ENCODE measurements at regions of chr14 and their contacts with region 1.

Region 1: DNA sequence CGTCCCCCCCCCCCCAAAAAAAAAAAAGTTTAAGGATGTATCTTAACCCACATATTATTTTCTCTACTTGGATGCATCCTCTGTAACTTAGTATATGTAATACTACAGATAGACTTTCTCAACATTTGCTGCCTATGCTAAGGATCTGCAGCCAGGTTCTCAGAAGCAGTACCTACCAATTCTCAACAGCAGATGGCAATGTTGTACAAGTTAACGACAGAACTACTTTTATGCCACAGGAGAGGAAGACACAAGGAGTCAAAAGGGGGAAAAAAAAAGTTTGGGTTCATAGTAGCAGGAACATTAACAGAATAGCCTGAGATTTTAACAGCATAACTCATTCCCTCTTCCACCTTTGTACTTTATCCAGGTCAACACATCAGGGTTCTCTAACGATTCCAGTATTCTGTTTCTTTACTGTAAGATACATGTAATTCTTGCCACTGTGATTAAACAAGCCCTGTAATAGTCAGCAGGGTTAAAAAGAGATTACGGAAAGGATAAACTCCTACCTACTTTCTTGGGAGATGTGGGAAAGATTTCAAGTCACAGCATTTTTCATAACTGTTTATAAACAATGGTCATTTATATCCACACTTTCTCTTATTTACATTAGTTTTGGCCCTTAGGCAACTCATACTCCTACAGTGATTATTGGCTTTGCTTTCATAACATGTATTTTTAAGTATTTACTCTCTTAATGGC is 5.7 kb upstream of the NEK9 start:
- DNase-seq: no peak

Region 2: GRCh38 chr14:74979442-74980361 is 152.8 kb before region 1 on chr14:
- intact Hi-C with region 1: no loop called
- DNase-seq: no peak

Region 3: DNA sequence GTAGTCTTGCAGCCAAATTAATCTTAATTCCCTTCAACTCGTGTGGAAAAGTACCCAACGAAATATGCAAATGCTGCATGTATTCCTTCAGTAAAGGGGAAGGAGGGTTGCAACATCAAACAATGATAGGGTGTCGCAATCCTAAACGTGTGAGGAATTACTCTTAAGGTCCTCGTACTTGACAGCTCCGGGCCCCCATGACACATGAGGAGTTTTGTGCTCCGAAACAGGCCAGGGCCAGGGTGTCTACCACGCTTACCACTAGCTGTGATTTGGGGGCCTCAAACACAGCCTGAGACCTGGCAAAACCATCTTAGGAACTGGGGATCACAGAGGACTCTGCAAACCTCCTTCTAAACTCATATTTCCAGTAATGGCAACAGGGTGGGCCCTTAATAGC is 166.5 kb after region 1 on chr14:
- intact Hi-C with region 1: loop called (anchors 2 kb)
- DNase-seq: peak; percentile 83

Region 4: DNA sequence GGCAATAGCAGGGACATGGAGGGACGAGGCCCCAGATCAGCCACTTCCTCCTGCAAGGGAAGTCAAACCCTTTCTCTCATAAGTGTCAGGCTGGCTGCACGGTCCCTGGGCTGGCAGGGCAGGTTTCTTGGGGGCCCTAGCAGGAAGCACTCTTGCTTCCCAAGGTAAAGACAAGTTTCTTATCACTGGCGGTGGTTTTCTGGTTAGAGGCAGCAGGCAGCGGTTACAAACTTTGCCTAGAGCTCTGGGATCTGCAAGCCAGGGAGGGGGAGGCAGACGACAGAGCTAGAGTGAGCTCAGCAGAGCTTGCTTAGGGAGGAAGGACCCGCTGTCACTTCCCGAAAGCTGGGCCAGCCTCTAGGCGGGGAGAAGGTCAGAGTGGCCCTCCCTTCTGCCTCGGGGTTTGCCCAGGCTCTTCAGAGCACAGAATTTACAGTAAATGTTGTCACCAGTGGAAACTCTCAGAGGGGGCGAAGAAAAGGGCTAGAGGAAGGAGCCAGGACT is 410.1 kb after region 1 on chr14:
- intact Hi-C with region 1: no loop called
- DNase-seq: peak; percentile 96

Measured in posterior vena cava (tissue), 2 donors.